SK-N-SH (cell line): ENCODE measurements at regions of chr5 and their contacts with region 1.

Region 1: GRCh38 chr5:171630027-171630669 is 155.5 kb upstream of the SMIM23 start:
- DNase-seq: peak; percentile 91
- H3K4me3 ChIP-seq: peak overlapping the region in 1 of 2 experiments; percentile 21; a peak in 2 of 4 replicates
- H3K27ac ChIP-seq: no peak overlapping the region
- H3K4me1 ChIP-seq: peaks cover 0 to 11% of the 10 kb centered on the region in 2 experiments; a peak in 1 of 4 replicates
- H3K27me3 ChIP-seq: 0 out of 2 replicates have a peak, but pooled peaks cover 9% of the 10 kb centered on the region
- CTCF ChIP-seq: peak; percentile 47
- EP300 ChIP-seq: no peak
- RAD21 ChIP-seq: peak; percentile 78

Region 2: DNA sequence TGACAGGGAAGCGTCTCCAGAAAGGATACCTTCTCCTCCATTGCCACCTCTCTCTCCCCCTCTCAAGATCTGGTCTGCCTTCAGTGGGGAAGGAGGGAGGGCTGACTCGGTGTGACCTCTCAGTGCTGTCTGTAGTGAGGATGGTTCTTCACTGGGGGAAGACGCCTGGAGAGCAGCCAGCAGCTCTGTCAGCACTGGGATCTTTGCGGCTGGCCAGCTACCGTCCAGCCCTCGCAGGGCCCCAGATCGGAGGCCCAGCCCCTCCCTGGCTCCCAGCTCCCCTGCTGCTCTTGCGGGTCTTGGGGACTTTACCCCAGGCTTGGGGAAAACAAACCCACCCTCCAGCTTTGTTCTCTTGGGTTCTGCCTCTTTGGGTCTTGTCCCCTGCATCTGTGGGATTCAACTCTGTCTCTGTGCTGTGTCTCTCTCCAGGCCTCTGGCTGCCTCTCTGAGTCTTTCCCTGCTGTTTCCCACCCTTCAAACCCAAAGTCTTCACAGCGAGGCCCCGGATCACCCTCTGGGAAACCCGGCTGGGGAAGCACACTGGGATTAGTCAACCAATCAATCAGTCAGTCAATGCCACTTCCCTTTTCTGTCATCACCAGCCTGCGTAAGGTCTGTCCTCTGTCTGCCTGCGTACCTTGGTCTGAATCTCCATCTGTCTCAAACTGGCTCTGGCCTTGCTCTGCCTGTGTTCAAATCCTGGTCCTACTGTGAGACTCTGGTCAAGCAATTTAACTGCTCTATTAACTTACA is 187.7 kb before region 1 on chr5:
- CTCF ChIA-PET with region 1: no interaction called
- POLR2A ChIA-PET with region 1: no interaction called
- DNase-seq: no peak
- H3K4me3 ChIP-seq: no peak overlapping the region
- H3K27ac ChIP-seq: no peak overlapping the region
- H3K4me1 ChIP-seq: peaks cover 0 to 3% of the 10 kb centered on the region in 2 experiments; a peak in 1 of 4 replicates
- H3K27me3 ChIP-seq: no peaks in the 10 kb centered on the region
- CTCF ChIP-seq: no peak
- EP300 ChIP-seq: no peak
- RAD21 ChIP-seq: no peak

Region 3: DNA sequence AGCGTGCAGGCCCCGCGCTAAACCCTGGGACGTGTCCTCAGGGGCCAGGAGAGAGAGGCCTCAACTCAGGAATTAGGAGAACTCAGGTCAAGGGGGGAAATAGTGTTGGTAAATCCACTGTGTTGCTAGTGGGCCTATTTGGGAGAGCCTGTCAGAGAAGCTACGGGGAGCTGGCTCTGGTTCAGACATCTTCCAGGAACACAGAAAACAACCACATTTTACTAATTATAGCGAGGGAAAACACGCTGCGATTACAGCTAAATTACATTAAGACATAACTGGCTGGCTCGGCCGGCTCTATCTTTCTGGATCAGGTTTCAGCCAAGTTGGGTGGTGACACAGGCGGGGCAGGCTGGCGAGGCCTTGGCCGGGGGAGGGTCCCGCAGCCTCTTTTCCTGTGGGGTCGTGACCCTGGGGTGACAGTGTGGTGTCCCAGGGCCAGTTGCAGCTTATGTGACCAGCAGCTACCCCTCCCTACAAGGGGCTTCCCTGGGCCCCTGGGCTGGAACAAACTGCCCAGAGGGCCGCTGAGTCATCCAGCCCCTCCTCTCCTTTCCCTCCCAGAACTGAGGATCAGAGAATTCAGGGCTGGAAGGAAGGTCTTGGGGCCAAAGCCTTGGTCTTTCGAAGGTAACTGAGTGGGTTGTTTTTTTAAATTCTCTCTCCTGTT is 135.6 kb before region 1 on chr5:
- CTCF ChIA-PET with region 1: interaction called, 10 read pairs
- POLR2A ChIA-PET with region 1: no interaction called
- DNase-seq: peak; percentile 86
- H3K4me3 ChIP-seq: 0 out of 4 replicates have a peak overlapping the region, but pooled peaks of 1 of the 2 experiments have one; percentile 4
- H3K27ac ChIP-seq: peak overlapping the region; percentile 84 to 87
- H3K4me1 ChIP-seq: peaks cover 19 to 43% of the 10 kb centered on the region in 2 experiments; a peak in 3 of 4 replicates
- H3K27me3 ChIP-seq: no peaks in the 10 kb centered on the region
- CTCF ChIP-seq: no peak
- EP300 ChIP-seq: peak; percentile 61 to 95; a peak in 3 of 4 replicates
- RAD21 ChIP-seq: peak; percentile 23; the same call in 1 of the 2 replicates

Region 4: DNA sequence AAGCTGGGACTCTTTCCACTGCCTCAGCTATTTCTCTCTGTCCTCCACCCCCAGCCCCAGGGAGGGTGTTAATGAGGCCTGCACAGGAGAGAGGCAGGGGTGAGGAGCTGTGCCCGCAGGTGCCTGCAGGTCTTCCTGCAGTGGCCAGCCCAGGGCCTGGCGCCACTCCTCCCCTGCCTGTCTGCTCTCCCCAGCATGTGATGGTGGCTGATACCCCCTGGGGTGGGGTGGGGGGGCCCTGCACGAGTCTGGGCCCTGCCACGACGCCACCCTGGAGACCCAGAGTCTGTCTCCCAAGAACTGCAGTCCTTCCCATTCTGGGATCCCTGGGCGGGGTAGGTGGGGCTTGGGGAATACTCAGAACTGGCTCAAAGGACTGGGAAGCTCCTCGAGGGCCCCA is 11.0 kb before region 1 on chr5:
- CTCF ChIA-PET with region 1: interaction called, 13 read pairs
- POLR2A ChIA-PET with region 1: no interaction called
- DNase-seq: no peak
- H3K4me3 ChIP-seq: no peak overlapping the region
- H3K27ac ChIP-seq: no peak overlapping the region
- H3K4me1 ChIP-seq: peaks cover 0 to 19% of the 10 kb centered on the region in 2 experiments; a peak in 1 of 4 replicates
- H3K27me3 ChIP-seq: peaks cover 8% of the 10 kb centered on the region; the same call in 1 of the 2 replicates
- CTCF ChIP-seq: no peak
- EP300 ChIP-seq: no peak
- RAD21 ChIP-seq: no peak

Region 5: DNA sequence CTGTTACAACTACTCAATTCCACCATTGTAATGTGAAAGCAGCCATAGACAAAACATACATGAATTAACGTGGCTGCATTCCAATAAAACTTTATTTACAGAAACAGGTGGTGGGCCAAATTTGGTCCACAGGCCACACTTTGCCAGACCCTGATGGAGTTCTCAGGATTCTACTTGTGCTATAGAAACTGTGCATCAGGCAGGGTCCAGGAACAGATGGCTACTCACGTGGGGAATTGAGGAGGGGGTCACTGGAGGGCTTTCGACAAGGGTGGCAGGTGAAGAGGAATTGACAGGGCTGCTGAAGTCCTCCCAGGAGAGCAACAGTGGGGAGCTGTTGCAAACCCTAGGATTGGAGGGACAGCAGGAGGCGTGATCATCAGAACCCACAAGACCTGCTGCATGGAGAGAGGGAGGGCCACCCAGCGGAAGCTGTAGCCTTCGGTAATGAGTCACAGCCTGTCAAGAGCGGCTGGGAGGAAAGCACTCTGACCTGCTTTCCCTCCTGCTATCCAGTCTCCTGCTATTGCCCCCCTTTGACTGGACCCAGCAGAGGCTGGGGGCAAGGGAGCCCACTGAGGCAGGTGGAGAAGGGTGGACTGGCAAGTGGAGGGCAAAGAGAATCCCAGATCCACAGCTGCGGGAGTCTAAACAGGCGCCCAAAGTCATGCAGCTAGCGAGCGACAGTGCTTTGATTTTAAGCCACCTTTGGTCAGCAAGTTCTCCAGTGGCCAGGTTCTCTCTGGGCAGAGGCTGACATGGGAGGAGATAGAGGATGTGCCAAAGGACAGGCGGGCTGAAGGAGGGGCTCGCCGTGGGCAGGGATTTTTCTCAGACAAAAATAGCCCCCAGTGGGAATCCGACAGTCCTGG is 17.1 kb after region 1 on chr5:
- CTCF ChIA-PET with region 1: interaction called, 11 read pairs
- POLR2A ChIA-PET with region 1: no interaction called
- DNase-seq: no peak
- H3K4me3 ChIP-seq: no peak overlapping the region
- H3K27ac ChIP-seq: no peak overlapping the region
- H3K4me1 ChIP-seq: peaks cover 0 to 6% of the 10 kb centered on the region in 2 experiments; a peak in 1 of 4 replicates
- H3K27me3 ChIP-seq: no peaks in the 10 kb centered on the region
- CTCF ChIP-seq: no peak
- EP300 ChIP-seq: no peak
- RAD21 ChIP-seq: no peak

Region 6: GRCh38 chr5:171826132-171826531 is 196.0 kb after region 1 on chr5:
- CTCF ChIA-PET with region 1: no interaction called
- POLR2A ChIA-PET with region 1: no interaction called
- DNase-seq: no peak
- H3K4me3 ChIP-seq: no peak overlapping the region
- H3K27ac ChIP-seq: no peak overlapping the region
- H3K4me1 ChIP-seq: no peaks in the 10 kb centered on the region
- H3K27me3 ChIP-seq: no peaks in the 10 kb centered on the region
- CTCF ChIP-seq: no peak
- EP300 ChIP-seq: no peak
- RAD21 ChIP-seq: no peak

Region 7: DNA sequence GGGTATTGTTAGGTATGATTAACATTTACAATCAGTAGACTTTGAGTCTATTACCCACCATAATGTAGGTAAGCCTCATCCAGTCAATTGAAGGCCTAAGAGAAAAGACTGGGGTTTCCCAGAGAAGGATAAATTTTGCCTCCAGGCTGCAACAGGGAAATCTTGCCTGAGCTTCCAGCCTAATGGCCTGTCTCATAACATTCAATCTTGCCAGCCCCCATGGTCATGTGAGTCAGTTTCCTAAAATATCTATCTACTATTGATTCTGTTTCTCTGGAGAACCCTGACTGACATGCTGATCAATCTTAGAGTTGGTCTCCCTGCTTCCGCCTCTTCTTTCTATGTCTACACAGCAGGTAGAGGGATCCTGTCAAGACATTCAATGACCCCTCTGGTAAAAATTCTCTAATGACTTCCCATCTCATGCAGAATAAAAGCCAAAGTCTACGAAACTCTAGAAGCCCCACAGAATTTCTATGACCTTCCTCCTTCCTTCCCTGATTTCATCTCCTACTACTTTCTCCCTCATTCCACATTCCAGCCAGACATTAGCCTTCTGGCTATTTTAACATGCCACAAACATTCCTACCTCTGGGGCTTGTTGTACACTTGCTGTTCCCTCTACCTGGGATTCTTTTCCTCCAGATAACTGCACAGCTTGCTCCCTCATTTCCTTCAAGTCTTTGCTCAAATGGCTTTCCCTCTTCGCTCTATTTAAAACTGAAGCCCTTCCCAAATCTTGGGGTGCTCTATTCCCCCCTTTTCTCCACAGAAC is 316.0 kb after region 1 on chr5:
- CTCF ChIA-PET with region 1: no interaction called
- POLR2A ChIA-PET with region 1: no interaction called
- DNase-seq: no peak
- H3K4me3 ChIP-seq: no peak overlapping the region
- H3K27ac ChIP-seq: no peak overlapping the region
- H3K4me1 ChIP-seq: no peaks in the 10 kb centered on the region
- H3K27me3 ChIP-seq: no peaks in the 10 kb centered on the region
- CTCF ChIP-seq: no peak
- EP300 ChIP-seq: no peak
- RAD21 ChIP-seq: no peak